Sigmoid colon (tissue), 7 donors: ENCODE measurements at regions of chr9 and their contacts with region 1.

Region 1: DNA sequence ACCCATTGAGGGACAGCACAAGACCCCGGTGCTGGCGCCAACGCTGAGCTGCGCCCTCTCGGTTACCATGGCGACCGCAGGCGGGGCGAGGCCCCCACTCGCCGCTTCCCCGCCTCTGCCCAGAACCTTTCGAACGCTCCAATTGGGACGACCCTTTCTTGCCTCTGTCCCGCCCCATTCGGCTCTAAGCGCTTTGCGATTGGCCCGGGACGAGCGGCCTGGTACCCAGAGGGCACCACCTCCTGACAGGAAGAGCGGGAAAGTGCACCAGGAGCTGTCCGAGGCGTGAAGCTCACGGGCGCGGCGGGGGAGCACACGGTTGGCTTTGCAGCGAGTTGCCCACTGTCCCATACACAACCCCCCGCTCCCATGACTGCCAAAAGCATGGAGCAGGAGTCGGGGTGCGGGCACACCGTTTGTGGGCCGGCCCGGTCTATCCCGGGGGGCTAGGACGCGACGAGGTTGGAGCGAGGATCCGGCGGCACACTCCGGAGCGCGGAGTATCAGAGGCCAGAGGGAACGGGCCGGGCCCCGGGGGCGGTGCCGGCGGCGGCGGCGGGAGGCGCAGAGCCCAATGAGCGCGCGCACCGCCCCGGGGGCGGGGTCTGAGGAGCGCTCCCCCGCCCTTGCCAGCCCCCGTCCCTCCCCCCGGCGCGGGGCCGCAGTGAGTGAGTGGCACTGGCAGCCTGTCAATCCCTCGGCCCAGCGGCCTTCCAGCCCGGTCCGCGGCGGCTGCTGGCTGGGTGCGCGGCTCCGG is 978 bp upstream of the PBX3 start:
- DNase-seq: peak; percentile 96
- H3K4me3 ChIP-seq: peak overlapping the region; percentile 47 to 94 (median 80)
- H3K27ac ChIP-seq: peak overlapping the region; percentile 88 to 94 (median 92)
- H3K4me1 ChIP-seq: peaks cover 0 to 16% (median 8%) of the 10 kb centered on the region in 4 donors
- H3K27me3 ChIP-seq: no peaks in the 10 kb centered on the region
- CTCF ChIP-seq: no peak
- EP300 ChIP-seq: no peak
- POLR2A ChIP-seq: no peak

Region 2: DNA sequence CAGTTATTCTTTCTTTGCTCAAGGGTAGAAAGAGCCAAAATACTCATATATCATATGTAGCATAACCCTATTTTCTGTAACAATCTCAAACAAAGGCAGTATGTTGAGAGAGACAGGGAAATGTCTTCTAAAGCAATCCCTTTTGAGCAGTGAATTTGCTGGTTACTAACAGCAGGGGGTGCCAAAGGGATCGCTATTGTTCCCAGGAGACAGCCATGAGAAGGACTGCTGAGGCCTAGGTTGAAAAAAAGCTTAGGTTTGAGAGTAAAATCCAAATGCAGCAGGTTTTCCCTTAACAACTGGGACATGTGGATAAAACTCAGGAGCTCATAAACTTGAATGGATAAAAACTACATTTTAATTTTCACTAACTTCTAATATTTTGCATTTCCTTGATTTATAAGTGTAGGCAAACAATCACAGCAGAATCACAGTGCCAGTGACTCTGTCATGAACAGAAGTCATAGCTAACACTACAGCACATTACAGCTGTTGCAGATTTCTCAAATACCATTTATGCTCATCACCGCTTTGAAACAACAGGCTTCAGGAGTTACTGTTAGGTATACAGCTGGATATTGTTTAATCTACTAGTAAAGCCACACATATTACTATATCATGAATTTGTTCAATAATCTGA is 187.6 kb before region 1 on chr9:
- intact Hi-C with region 1: loop called (anchors 2 kb)
- DNase-seq: peak; percentile 83
- H3K4me3 ChIP-seq: no peak overlapping the region
- H3K27ac ChIP-seq: peak overlapping the region in 3 of 4 donors; percentile 4 to 42 (median 24)
- H3K4me1 ChIP-seq: peaks cover 0 to 51% (median 28%) of the 10 kb centered on the region in 4 donors
- H3K27me3 ChIP-seq: no peaks in the 10 kb centered on the region
- CTCF ChIP-seq: peak; percentile 59 to 77 (median 74)
- EP300 ChIP-seq: no peak
- POLR2A ChIP-seq: no peak

Region 3: GRCh38 chr9:125608489-125609224 is 137.5 kb before region 1 on chr9:
- intact Hi-C with region 1: no loop called
- DNase-seq: no peak
- H3K4me3 ChIP-seq: no peak overlapping the region
- H3K27ac ChIP-seq: no peak overlapping the region
- H3K4me1 ChIP-seq: peaks cover 0 to 21% (median 10%) of the 10 kb centered on the region in 4 donors
- H3K27me3 ChIP-seq: no peaks in the 10 kb centered on the region
- CTCF ChIP-seq: no peak
- EP300 ChIP-seq: no peak
- POLR2A ChIP-seq: no peak

Region 4: DNA sequence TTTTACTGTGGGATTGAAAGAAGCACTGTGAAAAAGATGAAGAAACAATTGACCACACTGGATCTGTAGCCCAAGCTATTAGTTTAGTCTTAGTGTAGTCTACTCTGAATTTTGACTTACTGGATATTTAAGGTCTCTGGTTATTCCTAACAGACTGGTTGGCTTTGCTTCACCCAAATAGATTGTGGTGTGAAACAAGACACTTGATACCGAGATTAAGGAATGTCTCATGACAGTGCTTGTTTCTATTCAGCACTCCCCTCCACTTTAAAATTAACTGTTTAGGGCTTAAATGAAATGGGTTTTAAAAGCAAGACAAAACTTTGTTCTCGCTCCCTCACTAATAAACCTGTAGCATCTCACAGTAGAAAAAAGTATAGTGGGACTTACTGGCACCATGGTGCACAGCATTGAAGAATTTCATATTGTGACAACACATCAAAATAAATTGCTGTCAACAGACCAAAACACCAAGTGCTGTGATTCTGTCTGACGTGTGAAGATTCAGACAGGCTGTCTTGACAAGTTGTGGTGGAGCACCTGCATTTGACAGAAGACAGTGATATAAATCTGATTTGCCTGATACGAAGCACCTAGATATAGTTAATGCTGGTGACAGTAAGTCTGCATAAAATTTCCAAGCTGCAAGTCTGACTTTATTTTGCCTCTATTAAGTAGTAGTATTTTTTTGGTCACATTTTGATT is 74.1 kb after region 1 on chr9:
- intact Hi-C with region 1: loop called (anchors 5 kb)
- DNase-seq: no peak
- H3K4me3 ChIP-seq: peak overlapping the region in 3 of 4 donors; percentile 8 to 35 (median 25)
- H3K27ac ChIP-seq: peak overlapping the region in 3 of 4 donors; percentile 59 to 77 (median 73)
- H3K4me1 ChIP-seq: peaks cover 0 to 58% (median 35%) of the 10 kb centered on the region in 4 donors
- H3K27me3 ChIP-seq: no peaks in the 10 kb centered on the region
- CTCF ChIP-seq: no peak
- EP300 ChIP-seq: no peak
- POLR2A ChIP-seq: no peak

Region 5: GRCh38 chr9:125966959-125967711 is 220.9 kb after region 1 on chr9:
- intact Hi-C with region 1: loop called (anchors 5 kb)
- DNase-seq: no peak
- H3K4me3 ChIP-seq: no peak overlapping the region
- H3K27ac ChIP-seq: no peak overlapping the region
- H3K4me1 ChIP-seq: peaks cover 0 to 4% (median 0%) of the 10 kb centered on the region in 4 donors
- H3K27me3 ChIP-seq: no peaks in the 10 kb centered on the region
- CTCF ChIP-seq: no peak
- EP300 ChIP-seq: no peak
- POLR2A ChIP-seq: no peak